ENCODE measurements at regions of chr16 and their contacts with region 1.

Region 1: GRCh38 chr16:81349996-81350618 is 35.3 kb downstream of the GAN start:
- DNase-seq: no peak
- H3K4me3 Mint-ChIP-seq: no peak overlapping the region
- H3K27ac Mint-ChIP-seq: no peak overlapping the region
- H3K4me1 Mint-ChIP-seq: peaks cover 4% of the 10 kb centered on the region
- H3K27me3 Mint-ChIP-seq: no peaks in the 10 kb centered on the region

Region 2: GRCh38 chr16:81204798-81205680 is 145.1 kb before region 1 on chr16:
- CTCF ChIA-PET with region 1: interaction called, 6 read pairs
- intact Hi-C with region 1: loop called (anchors 5 kb)
- DNase-seq: peak; percentile 43
- H3K4me3 Mint-ChIP-seq: no peak overlapping the region
- H3K27ac Mint-ChIP-seq: no peak overlapping the region
- H3K4me1 Mint-ChIP-seq: no peaks in the 10 kb centered on the region
- H3K27me3 Mint-ChIP-seq: peaks cover 3% of the 10 kb centered on the region

Region 3: GRCh38 chr16:81261049-81261648 is 89.0 kb before region 1 on chr16:
- CTCF ChIA-PET with region 1: interaction called, 4 read pairs
- intact Hi-C with region 1: loop called (anchors 1 kb)
- DNase-seq: peak; percentile 45
- H3K4me3 Mint-ChIP-seq: no peak overlapping the region
- H3K27ac Mint-ChIP-seq: no peak overlapping the region
- H3K4me1 Mint-ChIP-seq: no peaks in the 10 kb centered on the region
- H3K27me3 Mint-ChIP-seq: no peaks in the 10 kb centered on the region

Region 4: DNA sequence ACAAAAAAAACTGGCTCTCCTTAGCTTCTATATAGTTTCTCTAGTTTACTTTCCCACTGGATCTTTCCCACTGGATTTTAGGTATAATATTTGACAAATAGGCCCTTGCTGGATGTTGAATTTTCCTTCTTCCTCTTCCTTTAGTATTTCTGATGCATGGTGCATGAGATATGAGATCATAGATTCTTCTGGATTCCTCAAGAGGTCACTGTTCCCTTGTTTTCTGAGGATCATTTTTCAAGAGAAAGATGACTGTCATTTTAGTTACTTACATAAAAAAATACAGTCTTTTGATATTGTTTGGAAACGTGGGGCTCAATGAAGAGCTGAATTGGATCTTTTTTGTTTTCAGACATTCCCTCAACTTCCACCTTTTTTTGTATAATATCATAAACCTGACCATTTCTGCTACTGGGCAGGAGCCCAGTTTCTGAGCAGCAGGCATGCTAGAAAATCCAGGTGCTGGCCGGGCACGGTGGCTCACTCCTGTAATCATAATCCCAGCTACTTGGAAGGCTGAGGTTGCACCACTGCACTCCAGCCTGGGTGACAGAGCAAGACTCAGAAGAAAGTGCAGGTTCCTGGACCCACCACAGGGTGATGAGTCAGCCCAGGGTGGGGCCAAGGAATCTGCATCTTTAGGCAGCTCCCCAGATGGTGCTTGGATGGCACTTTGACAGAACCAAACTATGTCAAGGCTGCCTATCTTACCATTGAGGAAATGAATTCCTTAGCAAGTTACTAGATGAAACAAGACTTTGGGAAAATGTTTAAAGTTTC is 590.9 kb after region 1 on chr16:
- CTCF ChIA-PET with region 1: no interaction called
- intact Hi-C with region 1: no loop called
- DNase-seq: no peak
- H3K4me3 Mint-ChIP-seq: no peak overlapping the region
- H3K27ac Mint-ChIP-seq: no peak overlapping the region
- H3K4me1 Mint-ChIP-seq: no peaks in the 10 kb centered on the region
- H3K27me3 Mint-ChIP-seq: peaks cover 1% of the 10 kb centered on the region

Measured in activated naive CD4-positive, alpha-beta T cell treated with anti-CD3 and anti-CD28 coated beads for 36 hours (primary cell).